ENCODE measurements at regions of chr19 and their contacts with region 1.

Region 1: DNA sequence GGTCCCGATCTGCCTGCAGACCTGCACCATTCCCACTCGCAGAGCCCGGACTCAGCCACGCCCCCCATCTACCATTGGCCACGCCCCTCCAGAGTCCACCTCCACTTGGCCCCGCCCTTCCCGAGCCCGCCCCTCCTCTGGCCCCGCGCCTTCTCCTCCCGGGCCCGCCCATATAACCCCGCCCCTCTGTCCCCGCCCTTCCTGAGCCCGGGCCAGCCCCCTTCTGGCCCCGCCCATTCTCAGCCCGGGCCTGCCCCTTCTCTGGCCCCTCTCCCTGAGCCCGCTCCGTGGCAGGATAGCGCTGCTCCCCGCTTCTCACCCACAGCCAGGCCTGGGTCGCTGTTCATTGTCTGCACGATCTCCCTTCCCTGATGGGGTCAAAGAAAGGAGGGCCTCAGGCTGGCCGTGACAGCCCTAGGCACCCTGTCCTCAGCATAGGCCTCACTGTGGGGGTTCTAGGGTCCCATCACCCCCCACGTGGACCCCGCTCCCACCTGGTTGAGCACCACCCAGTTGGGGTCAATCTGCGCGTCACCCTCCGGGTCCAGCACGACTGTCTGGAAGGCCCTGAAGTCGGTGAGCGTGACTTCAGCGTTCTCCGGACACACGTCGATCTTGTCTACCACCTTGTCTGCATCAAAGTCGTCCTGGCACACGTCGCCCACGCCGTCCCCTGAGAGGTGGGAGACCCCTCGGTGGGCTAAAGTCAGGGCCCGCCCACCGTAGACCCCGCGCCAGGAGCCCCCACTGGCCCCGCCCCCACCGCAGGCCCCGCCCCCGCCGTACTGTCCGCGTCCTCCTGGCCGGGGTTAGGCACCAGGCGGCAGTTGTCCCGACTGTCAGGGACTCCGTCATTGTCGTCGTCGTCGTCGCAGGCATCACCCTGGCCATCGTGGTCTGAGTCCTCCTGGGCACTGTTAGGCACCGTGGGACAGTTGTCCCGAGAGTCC is 5.7 kb downstream of the COMP start:
- DNase-seq: peak; percentile 40
- ATAC-seq: peak; percentile 67
- H3K4me3 Mint-ChIP-seq: peak overlapping the region; percentile 44
- H3K27ac Mint-ChIP-seq: peak overlapping the region; percentile 41
- H3K4me1 Mint-ChIP-seq: peaks cover 42% of the 10 kb centered on the region
- H3K27me3 Mint-ChIP-seq: peaks cover 47% of the 10 kb centered on the region
- CTCF ChIP-seq: no peak

Region 2: DNA sequence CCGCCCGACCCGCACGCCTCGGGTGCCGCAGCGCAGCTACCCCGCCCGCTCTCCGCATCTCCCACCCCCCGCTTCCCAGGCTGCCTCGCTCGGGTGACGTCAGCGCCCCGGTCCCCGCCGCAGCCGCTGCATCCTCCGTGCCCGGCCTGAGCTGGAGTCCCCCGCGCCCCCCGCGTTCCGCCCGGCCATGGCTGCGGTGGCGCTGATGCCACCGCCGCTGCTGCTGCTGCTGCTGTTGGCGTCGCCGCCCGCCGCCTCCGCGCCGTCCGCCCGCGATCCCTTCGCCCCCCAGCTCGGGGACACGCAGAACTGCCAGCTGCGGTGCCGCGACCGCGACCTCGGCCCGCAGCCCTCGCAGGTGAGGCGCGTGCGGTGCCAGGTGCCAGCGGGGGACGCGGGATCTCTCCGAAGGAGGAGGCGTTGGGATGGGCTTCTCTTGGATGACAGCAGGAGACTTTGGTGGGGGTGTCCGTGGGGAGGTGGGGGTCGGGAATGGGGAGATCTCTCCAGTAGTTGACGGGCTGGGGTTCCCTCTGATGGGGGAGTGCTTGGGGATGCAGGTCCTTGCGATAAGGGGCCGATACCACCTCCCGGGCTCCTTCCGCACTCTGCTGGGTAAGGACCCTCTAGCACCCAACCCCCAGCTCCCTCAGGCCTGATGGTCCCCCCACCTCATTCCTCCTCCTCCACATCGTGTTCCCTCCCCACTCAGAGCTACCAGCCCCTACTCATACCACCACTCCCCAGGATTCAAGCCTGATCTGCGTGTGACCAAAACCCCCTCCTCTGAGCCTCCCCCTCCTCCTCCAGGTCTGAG is 172.5 kb before region 1 on chr19 and contains the start of gene TMEM59L:
- CTCF ChIA-PET with region 1: no interaction called
- POLR2A ChIA-PET with region 1: no interaction called
- intact Hi-C with region 1: loop called (anchors 5 kb)
- DNase-seq: peak; percentile 45
- ATAC-seq: peak; percentile 54
- H3K4me3 Mint-ChIP-seq: peak within 1 kb of the TSS; percentile 78
- H3K27ac Mint-ChIP-seq: no peak within 1 kb of the TSS
- H3K4me1 Mint-ChIP-seq: peaks cover 23% of the 10 kb centered on the region
- H3K27me3 Mint-ChIP-seq: peaks cover 63% of the 10 kb centered on the region
- CTCF ChIP-seq: no peak
- total RNA-seq, gene TMEM59L: 0.64 TPM in 1 of 2 replicates, not detected in the other

Region 3: DNA sequence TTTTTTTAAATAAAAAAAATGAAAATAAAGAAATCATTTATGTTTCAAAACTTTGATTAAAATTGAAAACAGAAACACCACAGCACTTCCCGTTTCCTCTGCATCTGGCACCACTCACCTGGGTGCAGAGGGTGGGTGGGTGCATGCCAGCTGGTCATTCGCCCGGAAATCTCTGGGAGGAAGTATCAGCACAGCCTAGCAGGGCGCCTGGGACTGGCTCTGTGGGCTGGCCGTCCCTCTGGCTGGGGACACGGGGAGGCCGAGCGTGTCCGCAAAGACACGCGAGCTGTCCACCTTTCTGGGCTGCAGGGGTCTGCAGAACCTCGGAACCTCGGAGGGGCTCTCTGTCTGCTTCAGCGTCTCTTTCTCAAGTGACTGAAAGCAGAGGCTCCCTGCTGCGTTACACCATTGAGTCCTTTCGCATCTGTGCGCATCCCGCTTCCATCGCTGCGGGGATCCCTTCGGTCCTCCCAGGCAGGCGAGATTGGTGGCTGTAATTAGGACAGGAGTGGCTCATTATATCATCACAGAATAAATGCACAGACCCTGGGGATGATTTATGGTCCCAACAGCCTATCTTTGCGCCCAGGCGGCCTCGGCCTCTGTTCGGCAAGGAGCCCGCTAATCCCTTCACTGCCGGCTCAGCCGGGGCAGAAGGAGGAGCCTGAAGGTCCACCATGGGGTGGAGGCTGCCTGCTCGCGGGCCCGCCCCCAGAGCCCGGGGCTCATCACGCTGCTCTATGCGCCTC is 84.8 kb before region 1 on chr19:
- CTCF ChIA-PET with region 1: no interaction called
- POLR2A ChIA-PET with region 1: no interaction called
- intact Hi-C with region 1: loop called (anchors 5 kb)
- DNase-seq: peak; percentile 63
- ATAC-seq: peak; percentile 87
- H3K4me3 Mint-ChIP-seq: peak overlapping the region; percentile 85
- H3K27ac Mint-ChIP-seq: peak overlapping the region; percentile 95
- H3K4me1 Mint-ChIP-seq: peaks cover 46% of the 10 kb centered on the region
- H3K27me3 Mint-ChIP-seq: no peaks in the 10 kb centered on the region
- CTCF ChIP-seq: no peak

Region 4: DNA sequence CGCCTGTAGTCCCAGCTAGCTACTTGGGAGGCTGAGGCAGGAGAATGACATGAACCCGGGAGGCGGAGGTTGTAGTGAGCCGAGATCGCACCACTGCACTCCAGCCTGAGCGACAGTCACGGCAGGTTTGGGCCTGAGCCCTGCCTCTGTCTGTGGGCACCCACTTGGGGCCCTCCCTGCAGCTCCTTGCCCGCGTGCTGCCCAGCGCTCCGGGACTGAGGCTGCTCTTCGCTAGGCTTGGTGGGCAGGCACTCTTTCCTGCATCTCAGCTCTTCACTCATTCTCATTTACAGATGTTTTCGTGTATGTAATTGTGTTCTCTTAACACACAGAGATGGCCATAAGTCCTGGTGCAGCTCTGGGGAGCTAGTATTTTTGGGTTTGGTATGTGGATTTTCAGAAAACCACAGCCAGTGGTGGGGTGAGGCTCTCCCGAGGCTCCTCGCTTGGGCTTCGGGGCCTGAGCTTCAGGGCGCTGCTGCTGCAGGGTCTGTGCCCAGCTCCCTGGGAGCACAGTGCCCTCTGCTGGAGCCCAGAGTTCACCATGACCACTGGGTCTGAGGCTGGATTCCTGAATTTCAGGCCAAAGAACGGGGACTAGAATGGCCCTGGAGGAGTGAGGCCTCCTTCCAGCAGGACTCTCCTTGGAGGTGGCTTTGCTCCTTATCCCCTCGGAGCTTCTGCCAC is 61.6 kb after region 1 on chr19:
- CTCF ChIA-PET with region 1: no interaction called
- POLR2A ChIA-PET with region 1: no interaction called
- intact Hi-C with region 1: no loop called
- DNase-seq: peak; percentile 56
- ATAC-seq: peak; percentile 77
- H3K4me3 Mint-ChIP-seq: no peak overlapping the region
- H3K27ac Mint-ChIP-seq: peak overlapping the region; percentile 46
- H3K4me1 Mint-ChIP-seq: peaks cover 75% of the 10 kb centered on the region
- H3K27me3 Mint-ChIP-seq: no peaks in the 10 kb centered on the region
- CTCF ChIP-seq: peak; percentile 35